CD4-positive, alpha-beta T cell (primary cell): ENCODE measurements at regions of chr12 and their contacts with region 1.

Region 1: DNA sequence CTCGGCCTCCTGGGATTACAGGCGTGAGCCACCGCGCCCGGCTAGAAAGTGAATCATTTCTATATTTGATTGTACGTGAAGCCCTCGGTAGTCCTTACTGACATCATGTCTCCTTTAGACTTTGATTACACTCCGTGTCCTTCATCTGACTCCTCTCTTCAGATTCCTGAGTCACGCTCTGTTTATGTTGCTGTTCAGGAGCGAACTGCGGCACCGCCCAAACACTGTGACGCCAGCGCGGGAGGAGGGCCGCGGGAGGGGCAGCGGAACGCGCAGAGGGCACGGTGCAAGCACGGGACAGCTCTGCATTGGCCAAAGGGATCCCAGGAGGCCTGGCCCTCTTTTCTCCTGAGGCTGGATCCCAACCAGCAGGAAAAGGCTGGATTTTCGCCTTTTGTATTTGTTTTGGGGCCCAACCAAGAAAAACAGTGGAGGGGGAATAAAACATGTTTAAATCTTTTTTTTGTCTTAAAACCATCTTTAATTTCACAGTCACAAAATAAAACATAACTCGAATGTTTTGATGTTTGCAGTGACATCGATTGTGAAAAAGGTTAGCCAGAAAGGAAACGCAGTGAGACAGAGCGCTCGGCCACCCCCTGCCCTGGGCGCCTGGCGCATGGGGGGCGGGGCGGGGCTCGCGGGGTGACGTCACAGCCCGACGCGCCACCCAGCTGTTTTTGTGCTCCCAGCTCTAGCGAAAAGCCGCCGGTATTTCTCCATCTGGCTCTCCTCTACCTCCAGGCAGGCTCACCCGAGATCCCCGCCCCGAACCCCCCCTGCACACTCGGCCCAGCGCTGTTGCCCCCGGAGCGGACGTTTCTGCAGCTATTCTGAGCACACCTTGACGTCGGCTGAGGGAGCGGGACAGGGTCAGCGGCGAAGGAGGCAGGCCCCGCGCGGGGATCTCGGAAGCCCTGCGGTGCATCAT is at the start of gene GABARAPL1:
- DNase-seq: peak; percentile 69 to 95 (median 86)
- ATAC-seq: peak; percentile 75
- H3K4me3 ChIP-seq: peak within 1 kb of the TSS; percentile 87
- H3K4me3 Mint-ChIP-seq: peak within 1 kb of the TSS; percentile 95
- H3K27ac ChIP-seq: peak within 1 kb of the TSS; percentile 77 to 89
- H3K27ac Mint-ChIP-seq: peak within 1 kb of the TSS; percentile 98
- H3K4me1 ChIP-seq: peaks cover 31% of the 10 kb centered on the region
- H3K4me1 Mint-ChIP-seq: peaks cover 31% of the 10 kb centered on the region
- H3K27me3 ChIP-seq: no peaks in the 10 kb centered on the region
- H3K27me3 Mint-ChIP-seq: peaks cover 6% of the 10 kb centered on the region
- CTCF ChIP-seq: no peak
- total RNA-seq, gene GABARAPL1: 267 to 276 TPM

Region 2: GRCh38 chr12:9760699-9761418 is 451.6 kb before region 1 on chr12 and contains the start of gene CD69:
- CTCF ChIA-PET with region 1: no interaction called
- POLR2A ChIA-PET with region 1: interaction called, 5 read pairs
- intact Hi-C with region 1: loop called in 1 of 2 experiments (anchors 2 kb)
- DNase-seq: peak; percentile 56 to 96 (median 69)
- ATAC-seq: peak; percentile 43
- H3K4me3 ChIP-seq: peak within 1 kb of the TSS; percentile 79
- H3K4me3 Mint-ChIP-seq: peak within 1 kb of the TSS; percentile 97
- H3K27ac ChIP-seq: peak within 1 kb of the TSS; percentile 98
- H3K27ac Mint-ChIP-seq: peak within 1 kb of the TSS; percentile 99
- H3K4me1 ChIP-seq: peaks cover 34% of the 10 kb centered on the region
- H3K4me1 Mint-ChIP-seq: peaks cover 68% of the 10 kb centered on the region
- H3K27me3 ChIP-seq: no peaks in the 10 kb centered on the region
- H3K27me3 Mint-ChIP-seq: no peaks in the 10 kb centered on the region
- CTCF ChIP-seq: no peak
- total RNA-seq, gene CD69: 631 to 659 TPM

Region 3: GRCh38 chr12:10153271-10154144 is 59.0 kb before region 1 on chr12:
- CTCF ChIA-PET with region 1: interaction called, 5 read pairs
- POLR2A ChIA-PET with region 1: no interaction called
- intact Hi-C with region 1: loop called in 1 of 2 experiments (anchors 5 kb)
- DNase-seq: peak; percentile 22 to 79 (median 41)
- ATAC-seq: peak; percentile 78
- H3K4me3 ChIP-seq: peak overlapping the region; percentile 63
- H3K4me3 Mint-ChIP-seq: peak overlapping the region; percentile 95
- H3K27ac ChIP-seq: no peak overlapping the region
- H3K27ac Mint-ChIP-seq: peak overlapping the region; percentile 54
- H3K4me1 ChIP-seq: peaks cover 13% of the 10 kb centered on the region
- H3K4me1 Mint-ChIP-seq: peaks cover 9% of the 10 kb centered on the region
- H3K27me3 ChIP-seq: peaks cover 0 to 2% of the 10 kb centered on the region in 2 experiments
- H3K27me3 Mint-ChIP-seq: peaks cover 19% of the 10 kb centered on the region
- CTCF ChIP-seq: peak; percentile 93

Region 4: GRCh38 chr12:10364815-10365622 is 152.6 kb after region 1 on chr12:
- CTCF ChIA-PET with region 1: no interaction called
- POLR2A ChIA-PET with region 1: interaction called, 9 read pairs
- intact Hi-C with region 1: loop called in 1 of 2 experiments (anchors 10 kb)
- DNase-seq: peak; percentile 23 to 87 (median 48)
- ATAC-seq: peak; percentile 81
- H3K4me3 ChIP-seq: peak overlapping the region; percentile 73
- H3K4me3 Mint-ChIP-seq: no peak overlapping the region
- H3K27ac ChIP-seq: peak overlapping the region; percentile 52 to 77
- H3K27ac Mint-ChIP-seq: no peak overlapping the region
- H3K4me1 ChIP-seq: peaks cover 18% of the 10 kb centered on the region
- H3K4me1 Mint-ChIP-seq: peaks cover 12% of the 10 kb centered on the region
- H3K27me3 ChIP-seq: no peaks in the 10 kb centered on the region
- H3K27me3 Mint-ChIP-seq: no peaks in the 10 kb centered on the region
- CTCF ChIP-seq: no peak

Region 5: GRCh38 chr12:10613349-10614055 is 401.0 kb after region 1 on chr12 and contains the start of gene MAGOHB:
- CTCF ChIA-PET with region 1: no interaction called
- POLR2A ChIA-PET with region 1: interaction called, 21 read pairs
- intact Hi-C with region 1: loop called in 1 of 2 experiments (anchors 2 kb)
- DNase-seq: peak; percentile 95 to 100 (median 98)
- ATAC-seq: peak; percentile 91
- H3K4me3 ChIP-seq: peak within 1 kb of the TSS; percentile 94
- H3K4me3 Mint-ChIP-seq: peak within 1 kb of the TSS; percentile 99
- H3K27ac ChIP-seq: peak within 1 kb of the TSS; percentile 93 to 95
- H3K27ac Mint-ChIP-seq: peak within 1 kb of the TSS; percentile 99
- H3K4me1 ChIP-seq: peaks cover 11% of the 10 kb centered on the region
- H3K4me1 Mint-ChIP-seq: peaks cover 26% of the 10 kb centered on the region
- H3K27me3 ChIP-seq: no peaks in the 10 kb centered on the region
- H3K27me3 Mint-ChIP-seq: peaks cover 17% of the 10 kb centered on the region
- CTCF ChIP-seq: no peak
- total RNA-seq, gene MAGOHB: 7.5 to 7.7 TPM